Activated CD4-positive, alpha-beta T cell treated with anti-CD3 and anti-CD28 coated beads, Interleukin-2, amount 10 ng/mL, durations not matched to agents 24 days and 14 days (primary cell): ENCODE measurements at regions of chr10 and their contacts with region 1.

Region 1: GRCh38 chr10:11515596-11516430 is 95.6 kb downstream of the USP6NL start:
- DNase-seq: peak; percentile 85
- H3K4me3 Mint-ChIP-seq: no peak overlapping the region
- H3K27ac Mint-ChIP-seq: no peak overlapping the region
- H3K4me1 Mint-ChIP-seq: peaks cover 11% of the 10 kb centered on the region
- H3K27me3 Mint-ChIP-seq: peaks cover 47% of the 10 kb centered on the region

Region 2: GRCh38 chr10:11539191-11539868 is 23.5 kb after region 1 on chr10:
- intact Hi-C with region 1: loop called (anchors 2 kb)
- DNase-seq: no peak
- H3K4me3 Mint-ChIP-seq: no peak overlapping the region
- H3K27ac Mint-ChIP-seq: no peak overlapping the region
- H3K4me1 Mint-ChIP-seq: peaks cover 7% of the 10 kb centered on the region
- H3K27me3 Mint-ChIP-seq: peaks cover 34% of the 10 kb centered on the region

Region 3: DNA sequence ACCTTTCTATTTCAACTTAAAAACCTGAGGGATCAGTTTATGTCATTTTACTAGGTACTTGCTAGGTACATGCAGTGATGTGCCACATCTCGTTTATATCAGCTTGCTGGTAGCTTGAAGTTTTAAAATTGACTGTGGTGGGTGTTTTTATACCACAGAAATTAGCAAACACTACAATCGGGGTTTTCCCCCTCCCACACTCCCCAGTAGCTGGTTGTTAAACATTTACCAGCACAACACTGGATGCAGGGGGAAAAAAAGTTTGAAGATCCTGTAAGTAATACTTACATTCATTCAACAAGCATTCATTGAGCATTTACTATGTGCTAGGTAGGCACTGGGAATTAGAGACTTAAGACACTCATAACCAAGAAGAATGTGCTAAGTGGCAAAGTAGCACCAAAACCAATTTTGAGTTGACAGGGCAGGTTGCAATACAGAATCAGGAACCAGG is 63.0 kb after region 1 on chr10:
- intact Hi-C with region 1: loop called (anchors 2 kb)
- DNase-seq: no peak
- H3K4me3 Mint-ChIP-seq: no peak overlapping the region
- H3K27ac Mint-ChIP-seq: no peak overlapping the region
- H3K4me1 Mint-ChIP-seq: peaks cover 18% of the 10 kb centered on the region
- H3K27me3 Mint-ChIP-seq: peaks cover 21% of the 10 kb centered on the region

Region 4: DNA sequence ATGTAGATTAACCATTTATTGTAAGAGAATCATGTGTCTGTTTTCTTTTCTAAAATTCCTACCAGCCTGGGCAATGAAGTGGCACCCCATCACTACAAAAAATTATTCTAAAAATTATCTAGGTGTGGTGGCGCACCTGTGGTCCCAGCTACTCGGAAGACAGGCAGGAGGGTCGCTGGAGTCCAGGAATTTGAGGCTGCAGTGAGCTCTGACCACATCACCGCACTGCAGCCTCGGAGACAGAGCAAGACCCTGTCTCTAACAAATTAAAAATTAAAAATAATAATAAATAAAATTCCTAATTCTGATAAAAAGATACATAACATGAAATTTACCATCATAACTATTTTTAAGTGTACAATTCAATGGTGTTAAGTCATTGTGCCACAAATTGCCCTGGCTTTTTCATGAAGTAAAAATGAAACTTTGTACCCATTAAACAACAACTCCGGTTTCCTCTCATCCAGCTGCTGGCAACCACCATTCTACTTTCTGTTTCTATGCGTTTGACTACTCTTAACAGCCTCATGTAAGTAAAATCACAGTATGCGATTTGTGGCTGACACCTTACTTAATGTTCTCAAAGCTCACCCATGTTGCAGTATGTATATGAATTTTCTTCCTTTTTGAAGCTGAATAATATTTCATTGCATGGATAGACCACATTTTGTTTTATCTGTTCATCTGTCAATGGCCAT is 116.2 kb after region 1 on chr10:
- intact Hi-C with region 1: loop called (anchors 2 kb)
- DNase-seq: peak; percentile 81
- H3K4me3 Mint-ChIP-seq: peak overlapping the region; percentile 27
- H3K27ac Mint-ChIP-seq: peak overlapping the region; percentile 22
- H3K4me1 Mint-ChIP-seq: peaks cover 6% of the 10 kb centered on the region
- H3K27me3 Mint-ChIP-seq: peaks cover 49% of the 10 kb centered on the region

Region 5: DNA sequence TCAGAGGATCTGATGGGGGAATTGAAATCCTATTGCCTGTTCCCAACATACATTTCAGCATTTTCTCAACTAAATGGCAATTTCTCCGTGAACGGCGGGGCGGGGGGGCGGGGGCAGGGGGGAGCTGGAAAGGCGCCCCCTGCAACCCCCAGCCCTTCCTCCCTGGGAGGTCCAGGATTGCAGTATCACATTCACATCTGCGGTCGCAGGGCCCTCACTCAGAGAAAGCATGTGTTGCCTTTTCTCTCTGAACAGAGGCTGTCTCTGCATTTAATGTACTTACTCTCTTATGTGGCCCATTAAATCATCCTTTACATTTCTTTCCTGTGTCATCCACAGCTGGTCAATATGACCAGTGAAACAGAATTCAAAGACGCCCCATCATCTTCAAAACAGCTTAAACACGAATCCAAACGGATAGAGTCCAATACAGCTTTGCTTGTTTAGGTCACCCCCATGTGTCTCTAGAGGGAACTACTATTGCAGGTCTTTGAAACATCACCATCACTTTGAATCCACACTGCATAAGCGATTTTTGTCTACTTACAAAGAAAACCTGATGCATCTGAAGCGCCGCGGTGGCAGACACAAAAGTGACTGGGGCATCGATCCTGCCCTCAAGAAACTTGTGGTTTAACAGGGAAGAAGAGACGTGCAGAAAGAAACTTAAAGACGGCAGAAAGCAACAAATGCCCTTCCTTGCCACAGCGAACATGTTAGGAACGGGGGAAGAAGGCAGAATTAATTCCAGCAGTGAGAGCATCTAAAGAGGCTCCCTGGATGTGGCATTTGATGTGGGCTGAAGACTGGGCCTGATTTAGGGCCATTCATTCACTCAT is 209.3 kb after region 1 on chr10:
- intact Hi-C with region 1: loop called (anchors 1 kb)
- DNase-seq: peak; percentile 70
- H3K4me3 Mint-ChIP-seq: no peak overlapping the region
- H3K27ac Mint-ChIP-seq: no peak overlapping the region
- H3K4me1 Mint-ChIP-seq: peaks cover 4% of the 10 kb centered on the region
- H3K27me3 Mint-ChIP-seq: peaks cover 49% of the 10 kb centered on the region

Region 6: DNA sequence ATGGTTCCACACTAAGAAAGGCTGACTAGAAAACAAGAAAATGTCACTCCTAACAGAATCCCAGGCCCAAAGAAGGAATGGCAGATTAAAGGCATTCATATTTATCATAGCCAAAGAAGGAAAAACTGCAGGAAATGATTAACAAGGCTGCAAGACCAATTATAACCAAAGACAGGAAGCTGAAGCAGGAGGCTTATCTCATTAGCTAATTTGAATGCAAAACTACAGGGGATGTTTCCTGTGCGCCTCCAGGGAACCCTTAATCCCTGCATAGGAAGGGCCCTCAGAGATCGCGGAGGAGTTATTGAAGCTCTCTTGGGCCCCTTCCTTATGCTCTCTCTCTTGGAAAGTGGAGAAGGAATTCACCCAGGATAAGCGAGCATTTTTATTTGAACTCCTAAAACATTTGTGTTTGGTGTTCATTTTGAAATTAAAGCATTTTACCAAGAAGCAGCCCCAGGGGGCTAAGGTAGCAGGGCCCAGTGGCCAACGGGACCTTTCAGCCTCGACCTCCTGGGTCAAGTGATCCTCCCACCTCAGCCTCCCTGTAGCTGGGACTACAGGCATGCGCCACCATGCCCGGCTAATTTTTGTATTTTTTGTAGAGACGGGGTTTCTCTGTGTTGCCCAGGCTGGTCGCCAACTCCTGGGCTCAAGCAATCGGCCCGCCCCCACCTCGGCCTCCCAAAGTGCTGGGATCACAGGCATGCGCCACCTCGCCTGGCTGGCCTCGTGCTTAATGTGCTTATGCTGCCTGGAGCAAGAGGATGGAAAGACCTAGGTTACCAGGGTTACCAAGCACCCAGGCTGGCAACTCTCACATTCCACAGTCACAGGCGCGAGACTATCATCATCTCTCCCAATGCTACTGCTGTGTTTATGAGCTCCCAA is 283.3 kb after region 1 on chr10:
- intact Hi-C with region 1: no loop called
- DNase-seq: no peak
- H3K4me3 Mint-ChIP-seq: no peak overlapping the region
- H3K27ac Mint-ChIP-seq: no peak overlapping the region
- H3K4me1 Mint-ChIP-seq: peaks cover 4% of the 10 kb centered on the region
- H3K27me3 Mint-ChIP-seq: no peaks in the 10 kb centered on the region

Region 7: GRCh38 chr10:11986593-11987216 is 470.9 kb after region 1 on chr10:
- intact Hi-C with region 1: loop called (anchors 1 kb)
- DNase-seq: peak; percentile 91
- H3K4me3 Mint-ChIP-seq: no peak overlapping the region
- H3K27ac Mint-ChIP-seq: peak overlapping the region; percentile 60
- H3K4me1 Mint-ChIP-seq: peaks cover 6% of the 10 kb centered on the region
- H3K27me3 Mint-ChIP-seq: no peaks in the 10 kb centered on the region